CD8-positive, alpha-beta memory T cell (primary cell): ENCODE measurements at regions of chr2 and their contacts with region 1.

Region 1: DNA sequence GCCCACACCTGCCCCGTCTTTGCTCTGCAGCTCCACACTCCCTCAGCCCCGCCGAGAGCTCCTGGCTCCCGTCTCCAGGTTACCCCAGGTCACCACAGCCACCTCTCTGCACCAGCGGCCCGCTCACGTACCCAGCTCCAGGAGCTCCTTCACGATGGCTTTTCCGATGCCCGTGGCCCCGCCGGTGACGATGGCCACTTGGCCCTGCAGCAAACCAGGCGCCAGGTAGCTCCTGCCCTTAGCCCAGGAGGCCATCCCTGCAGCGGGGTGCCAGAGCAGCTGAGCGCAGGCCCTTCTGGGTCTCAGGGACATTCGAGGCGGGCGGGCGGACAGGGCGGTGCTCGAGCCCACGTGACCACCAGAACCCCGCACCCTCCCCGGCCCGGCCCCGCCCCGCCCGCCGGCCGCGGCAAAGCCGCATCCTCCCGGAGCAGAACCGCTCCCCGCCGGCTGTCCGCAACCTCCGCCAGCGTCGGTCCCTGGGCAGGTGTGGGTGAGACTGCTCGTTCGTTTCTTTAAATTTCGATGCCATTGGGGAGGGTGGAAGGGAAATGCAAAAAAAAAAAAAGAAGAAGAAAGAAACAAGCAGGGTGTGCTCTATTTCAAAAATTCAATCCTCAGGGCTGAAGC is at the starts of genes PECR and TMEM169:
- DNase-seq: peak; percentile 69 to 82 (median 72)
- H3K4me3 ChIP-seq: peak within 1 kb of the TSS; percentile 90
- H3K4me3 Mint-ChIP-seq: peak within 1 kb of the TSS; percentile 86 to 98 (median 93)
- H3K27ac ChIP-seq: peak within 1 kb of the TSS; percentile 59
- H3K27ac Mint-ChIP-seq: peak within 1 kb of the TSS; percentile 69 to 97 (median 94)
- H3K4me1 ChIP-seq: peaks cover 59% of the 10 kb centered on the region
- H3K4me1 Mint-ChIP-seq: peaks cover 50 to 67% (median 64%) of the 10 kb centered on the region in 3 donors
- H3K27me3 ChIP-seq: no peaks in the 10 kb centered on the region
- H3K27me3 Mint-ChIP-seq: no peaks in the 10 kb centered on the region
- total RNA-seq, gene PECR: 10.5 to 12.6 TPM
- total RNA-seq, gene TMEM169: 0.63 to 0.73 TPM

Region 2: DNA sequence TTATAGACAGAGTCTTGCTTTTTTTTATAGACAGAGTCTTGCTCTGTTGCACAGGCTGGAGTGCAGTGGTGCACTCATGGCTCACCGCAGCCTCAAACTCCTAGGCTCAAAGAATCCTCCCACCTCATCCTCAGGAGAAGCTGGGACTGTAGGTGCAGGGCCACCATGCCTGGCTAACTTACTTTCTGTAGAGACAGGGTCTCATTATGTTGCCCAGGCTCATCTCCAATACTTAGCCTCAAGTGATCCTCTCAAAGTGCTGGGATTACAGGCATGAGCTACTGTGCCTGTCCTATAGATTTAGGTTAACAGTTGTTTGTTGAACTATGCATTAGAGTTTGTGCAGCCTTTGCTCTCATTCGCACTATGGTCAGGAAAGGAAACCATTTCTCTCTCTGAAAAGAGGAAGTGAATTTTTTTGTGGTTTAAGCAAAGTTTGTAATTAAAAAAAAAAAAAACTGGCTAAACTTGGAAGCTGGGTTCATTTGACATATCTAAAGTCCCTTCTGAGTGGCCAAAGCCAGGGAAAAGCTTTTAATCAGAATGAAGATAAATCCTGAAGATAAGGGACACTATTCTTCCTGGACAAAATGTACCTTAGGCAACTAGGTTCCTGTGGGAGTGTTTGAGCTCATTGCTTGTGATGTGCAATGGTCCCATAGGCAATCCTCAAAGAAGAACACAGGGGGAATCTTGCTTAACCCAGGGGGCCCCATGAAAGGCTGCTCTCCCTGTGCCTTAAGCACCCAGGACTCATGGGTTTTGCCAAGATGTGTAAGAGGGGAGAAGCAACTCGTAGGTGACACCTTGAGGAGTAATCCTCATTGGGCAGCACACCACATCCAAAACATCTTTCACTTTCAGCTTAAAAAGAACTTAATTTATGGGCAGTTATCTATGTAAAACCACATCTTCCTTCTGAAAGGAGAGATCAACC is 269.9 kb before region 1 on chr2:
- CTCF ChIA-PET with region 1: no interaction called
- POLR2A ChIA-PET with region 1: no interaction called
- DNase-seq: peak in 2 of 5 donors; percentile 3 to 8
- H3K4me3 ChIP-seq: no peak overlapping the region
- H3K4me3 Mint-ChIP-seq: peak overlapping the region in 6 of 7 donors; percentile 13 to 80 (median 66)
- H3K27ac ChIP-seq: no peak overlapping the region
- H3K27ac Mint-ChIP-seq: peak overlapping the region in 6 of 8 donors; percentile 42 to 93 (median 54)
- H3K4me1 ChIP-seq: peaks cover 17% of the 10 kb centered on the region
- H3K4me1 Mint-ChIP-seq: peaks cover 21 to 28% (median 24%) of the 10 kb centered on the region in 3 donors
- H3K27me3 ChIP-seq: no peaks in the 10 kb centered on the region
- H3K27me3 Mint-ChIP-seq: peaks cover 0 to 1% of the 10 kb centered on the region in 2 donors

Region 3: DNA sequence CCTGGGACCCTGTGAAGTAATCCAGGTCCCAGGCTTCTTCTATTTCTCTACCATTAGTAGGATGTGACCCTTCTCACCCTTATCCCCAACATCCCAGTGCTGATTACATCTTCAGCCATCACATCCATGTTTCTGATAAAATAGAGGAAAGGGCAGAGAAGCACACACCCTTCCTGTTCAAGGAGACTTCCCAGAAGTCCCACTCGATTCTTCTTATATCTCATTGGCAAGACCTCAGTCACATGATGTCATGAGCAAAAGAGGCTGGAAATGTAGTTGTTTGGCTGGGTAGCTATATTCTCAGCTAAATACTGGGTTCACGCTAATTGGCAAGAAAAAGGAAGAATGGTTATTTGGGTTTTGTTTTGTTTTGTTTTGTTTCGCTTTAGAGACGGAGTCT is 19.5 kb after region 1 on chr2:
- CTCF ChIA-PET with region 1: no interaction called
- POLR2A ChIA-PET with region 1: no interaction called
- DNase-seq: no peak
- H3K4me3 ChIP-seq: no peak overlapping the region
- H3K4me3 Mint-ChIP-seq: no peak overlapping the region
- H3K27ac ChIP-seq: no peak overlapping the region
- H3K27ac Mint-ChIP-seq: no peak overlapping the region
- H3K4me1 ChIP-seq: no peaks in the 10 kb centered on the region
- H3K4me1 Mint-ChIP-seq: no peaks in the 10 kb centered on the region
- H3K27me3 ChIP-seq: no peaks in the 10 kb centered on the region
- H3K27me3 Mint-ChIP-seq: peaks cover 0 to 3% of the 10 kb centered on the region in 2 donors

Region 4: GRCh38 chr2:216114714-216115557 is 33.3 kb after region 1 on chr2:
- CTCF ChIA-PET with region 1: interaction called, 16 read pairs
- POLR2A ChIA-PET with region 1: interaction called, 21 read pairs
- DNase-seq: peak; percentile 94 to 99 (median 96)
- H3K4me3 ChIP-seq: peak overlapping the region; percentile 57
- H3K4me3 Mint-ChIP-seq: peak overlapping the region; percentile 88 to 94 (median 92)
- H3K27ac ChIP-seq: peak overlapping the region; percentile 71
- H3K27ac Mint-ChIP-seq: peak overlapping the region; percentile 93 to 98 (median 97)
- H3K4me1 ChIP-seq: peaks cover 94% of the 10 kb centered on the region
- H3K4me1 Mint-ChIP-seq: peaks cover 83 to 100% (median 99%) of the 10 kb centered on the region in 3 donors
- H3K27me3 ChIP-seq: no peaks in the 10 kb centered on the region
- H3K27me3 Mint-ChIP-seq: peaks cover 0 to 1% of the 10 kb centered on the region in 2 donors